ENCODE measurements at regions of chr14 and their contacts with region 1.

Region 1: GRCh38 chr14:70816525-70816924 is 7.2 kb upstream of the MAP3K9 start:
- DNase-seq: no peak
- CTCF ChIP-seq: no peak

Region 2: DNA sequence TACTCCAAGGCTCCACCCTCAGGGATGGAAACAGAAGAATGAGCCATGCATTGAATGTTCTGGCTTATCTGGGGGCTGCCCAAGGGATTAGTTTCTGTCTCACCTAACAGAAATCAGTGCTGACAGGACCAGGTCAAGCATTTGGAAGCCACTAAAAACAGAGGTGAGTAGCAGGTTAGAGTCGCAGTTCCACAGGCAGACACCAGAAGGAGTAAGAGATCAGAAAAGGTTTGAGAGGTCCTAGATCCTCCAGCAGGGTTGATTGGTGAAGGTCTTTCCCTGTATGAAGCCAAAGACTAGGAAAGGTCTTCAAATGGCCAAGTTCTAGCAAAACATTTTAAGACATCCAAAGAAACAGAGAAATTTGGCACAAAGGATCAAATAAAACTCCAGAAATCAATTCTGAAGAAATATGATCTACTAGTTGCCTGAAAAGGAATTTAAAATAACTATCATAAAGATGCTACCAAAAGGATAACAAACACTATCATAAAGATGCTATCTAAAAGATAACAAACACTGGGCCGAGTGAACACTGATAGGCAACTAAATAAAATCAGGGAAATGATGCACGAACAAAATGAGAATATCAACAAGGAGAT is 194.3 kb before region 1 on chr14:
- in situ Hi-C with region 1: loop called (anchors 5 kb)
- DNase-seq: peak; percentile 64
- CTCF ChIP-seq: peak; percentile 85

Region 3: DNA sequence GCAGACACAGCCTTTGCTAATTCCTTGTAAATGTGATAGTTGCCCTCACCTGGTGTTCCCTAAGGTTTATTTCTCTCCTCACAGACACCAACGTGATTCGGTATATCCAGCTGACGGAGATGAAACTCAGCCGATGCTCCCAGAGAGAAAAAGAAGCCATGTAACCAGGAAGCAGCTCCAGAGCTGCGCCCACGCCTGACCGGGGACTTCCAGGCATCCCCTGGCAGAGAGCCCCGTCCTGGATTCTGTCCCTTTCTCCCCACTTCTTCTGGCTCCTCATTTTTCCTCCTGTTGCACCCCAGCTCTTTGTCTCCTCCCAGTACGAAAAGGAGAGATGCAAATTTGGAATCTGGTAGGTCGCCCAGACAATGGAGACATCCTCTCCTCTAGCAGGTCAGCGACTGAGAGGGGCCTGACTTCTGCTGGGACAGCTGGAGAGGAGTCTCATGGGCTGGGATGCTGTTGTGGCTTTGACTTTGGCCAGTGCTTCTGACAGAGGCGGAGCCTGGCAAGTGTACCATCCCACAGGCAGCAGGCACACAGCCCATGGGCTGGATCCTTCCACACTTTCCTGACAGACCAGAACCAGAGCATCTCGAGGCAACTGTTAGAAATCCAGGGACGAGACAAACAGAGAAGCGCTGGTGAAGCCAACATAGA is 145.4 kb before region 1 on chr14:
- in situ Hi-C with region 1: no loop called
- DNase-seq: no peak
- CTCF ChIP-seq: no peak

Region 4: GRCh38 chr14:70972107-70972976 is 155.8 kb after region 1 on chr14:
- in situ Hi-C with region 1: loop called (anchors 5 kb)
- DNase-seq: peak; percentile 50
- CTCF ChIP-seq: peak; percentile 77

Region 5: GRCh38 chr14:71166180-71166790 is 349.8 kb after region 1 on chr14:
- in situ Hi-C with region 1: no loop called
- DNase-seq: no peak
- CTCF ChIP-seq: peak; percentile 57

Measured in GM13977 (cell line).